Activated B cell treated with CpG ODN at 0.5 μM for 24 hours (primary cell): ENCODE measurements at regions of chr13 and their contacts with region 1.

Region 1: DNA sequence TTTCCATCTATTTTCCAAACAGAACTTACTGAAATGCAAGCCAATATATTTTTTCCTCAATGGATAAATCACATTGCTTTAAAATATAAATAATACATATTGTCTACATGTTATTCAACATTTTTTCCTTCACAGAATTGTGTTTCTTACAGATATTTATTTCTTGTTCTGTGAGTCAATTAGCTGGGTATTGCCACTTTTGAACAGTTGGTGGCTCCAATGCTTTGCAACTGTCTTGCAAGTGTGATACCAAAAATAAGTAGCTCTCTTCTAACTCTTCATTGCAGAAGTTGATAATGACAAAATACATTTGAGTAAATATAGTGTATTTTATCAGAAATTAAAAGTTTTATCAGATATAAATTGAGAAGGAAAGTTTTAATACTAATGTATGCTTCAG is 17.1 kb upstream of the GPC5 start:
- DNase-seq: no peak
- ATAC-seq: no peak
- H3K4me3 Mint-ChIP-seq: no peak overlapping the region
- H3K27ac Mint-ChIP-seq: no peak overlapping the region
- H3K4me1 Mint-ChIP-seq: no peaks in the 10 kb centered on the region
- H3K27me3 Mint-ChIP-seq: peaks cover 5% of the 10 kb centered on the region
- CTCF ChIP-seq: no peak

Region 2: DNA sequence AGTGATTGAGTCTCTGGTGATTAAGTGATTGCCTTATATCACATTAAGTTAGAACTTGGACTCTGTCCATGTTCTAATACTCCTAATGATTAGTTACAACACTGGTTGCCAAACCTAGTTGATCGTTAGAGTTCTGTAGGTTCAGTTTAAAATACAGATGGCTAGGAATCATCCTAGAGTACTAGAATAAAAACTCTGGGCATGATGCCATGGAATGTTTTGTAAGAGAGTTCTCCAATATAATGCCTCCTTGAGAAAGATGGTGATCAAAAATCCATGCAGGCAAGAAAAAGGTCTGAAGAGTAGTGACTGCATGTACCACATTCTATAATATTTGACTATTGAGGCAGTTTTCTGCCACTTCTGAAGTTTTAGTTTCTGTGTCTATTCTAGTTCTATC is 193.4 kb after region 1 on chr13:
- CTCF ChIA-PET with region 1: no interaction called
- POLR2A ChIA-PET with region 1: no interaction called
- intact Hi-C with region 1: no loop called
- DNase-seq: no peak
- ATAC-seq: no peak
- H3K4me3 Mint-ChIP-seq: no peak overlapping the region
- H3K27ac Mint-ChIP-seq: no peak overlapping the region
- H3K4me1 Mint-ChIP-seq: no peaks in the 10 kb centered on the region
- H3K27me3 Mint-ChIP-seq: no peaks in the 10 kb centered on the region
- CTCF ChIP-seq: no peak

Region 3: GRCh38 chr13:91722267-91722884 is 341.0 kb after region 1 on chr13:
- CTCF ChIA-PET with region 1: interaction called, 3 read pairs
- POLR2A ChIA-PET with region 1: no interaction called
- intact Hi-C with region 1: loop called (anchors 1 kb)
- DNase-seq: no peak
- ATAC-seq: no peak
- H3K4me3 Mint-ChIP-seq: no peak overlapping the region
- H3K27ac Mint-ChIP-seq: no peak overlapping the region
- H3K4me1 Mint-ChIP-seq: no peaks in the 10 kb centered on the region
- H3K27me3 Mint-ChIP-seq: no peaks in the 10 kb centered on the region
- CTCF ChIP-seq: peak; percentile 37